Heart right ventricle (tissue), 16 donors: ENCODE measurements at regions of chr7 and their contacts with region 1.

Region 1: GRCh38 chr7:141133646-141134045 is 59.8 kb downstream of the TMEM178B start:
- DNase-seq: no peak
- ATAC-seq: no peak
- H3K4me3 ChIP-seq: no peak overlapping the region
- H3K27ac ChIP-seq: no peak overlapping the region
- H3K4me1 ChIP-seq: peaks cover 0 to under 1% (median 0%) of the 10 kb centered on the region in 9 donors
- H3K27me3 ChIP-seq: no peaks in the 10 kb centered on the region
- CTCF ChIP-seq: no peak

Region 2: GRCh38 chr7:141094336-141095070 is 39.1 kb before region 1 on chr7:
- intact Hi-C with region 1: loop called in 1 of 10 experiments (anchors 1 kb)
- DNase-seq: no peak
- ATAC-seq: no peak
- H3K4me3 ChIP-seq: no peak overlapping the region
- H3K27ac ChIP-seq: no peak overlapping the region
- H3K4me1 ChIP-seq: peaks cover 0 to 7% (median 0%) of the 10 kb centered on the region in 9 donors
- H3K27me3 ChIP-seq: no peaks in the 10 kb centered on the region
- CTCF ChIP-seq: no peak

Region 3: GRCh38 chr7:141208539-141208938 is 74.9 kb after region 1 on chr7:
- intact Hi-C with region 1: no loop called
- DNase-seq: no peak
- ATAC-seq: no peak
- H3K4me3 ChIP-seq: no peak overlapping the region
- H3K27ac ChIP-seq: no peak overlapping the region
- H3K4me1 ChIP-seq: peaks cover 0 to 7% (median 0%) of the 10 kb centered on the region in 9 donors
- H3K27me3 ChIP-seq: no peaks in the 10 kb centered on the region
- CTCF ChIP-seq: no peak